ENCODE measurements at regions of chr1 and their contacts with region 1.

Region 1: DNA sequence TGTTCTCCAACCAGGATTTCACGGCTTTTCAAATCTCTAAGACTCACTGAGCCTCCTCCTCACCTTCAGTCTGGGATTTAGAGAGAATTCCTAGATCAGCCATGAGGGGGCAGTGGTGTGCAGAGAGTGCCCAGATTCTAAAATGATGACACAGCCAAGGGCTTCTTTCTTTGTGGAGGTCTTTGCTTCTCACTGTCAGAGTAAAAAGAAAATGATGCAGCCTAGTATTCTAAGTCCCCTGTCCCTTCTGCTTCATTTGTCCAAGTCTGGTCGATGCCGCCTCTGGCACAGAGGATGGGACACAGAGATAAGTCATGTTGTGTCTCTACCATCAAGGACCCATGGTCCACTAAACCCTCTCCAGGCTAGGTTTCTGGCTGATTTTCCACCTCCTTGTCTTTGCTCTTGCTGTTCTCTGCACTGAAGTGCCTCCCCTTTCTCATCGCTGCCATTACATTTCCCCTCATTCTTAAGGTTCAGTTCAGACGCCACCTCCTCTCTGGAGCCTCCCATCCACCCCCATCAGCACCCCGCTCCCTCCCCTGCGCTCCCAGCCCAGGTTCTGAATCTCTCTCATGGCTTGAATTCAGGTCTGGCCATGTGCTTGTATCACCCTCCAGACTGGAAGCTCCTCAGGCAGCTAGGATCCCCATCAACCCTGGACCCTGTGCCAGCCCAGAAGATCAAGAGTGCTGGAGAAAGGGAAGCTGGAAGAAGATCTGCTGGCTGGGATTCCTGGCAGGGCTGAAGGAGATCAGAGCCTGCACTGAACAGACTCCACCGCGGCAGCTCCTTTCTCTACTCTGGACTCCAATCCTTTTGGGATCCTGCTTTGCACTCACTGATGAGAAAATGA is 12.0 kb upstream of the TINAGL1 start:
- DNase-seq: peak; percentile 63 to 76
- H3K4me3 ChIP-seq: no peak overlapping the region
- H3K4me3 Mint-ChIP-seq: no peak overlapping the region
- H3K27ac Mint-ChIP-seq: peak overlapping the region; percentile 95
- H3K4me1 ChIP-seq: peaks cover 28% of the 10 kb centered on the region
- H3K4me1 Mint-ChIP-seq: peaks cover 19% of the 10 kb centered on the region
- H3K27me3 ChIP-seq: no peaks in the 10 kb centered on the region
- H3K27me3 Mint-ChIP-seq: no peaks in the 10 kb centered on the region
- CTCF ChIP-seq: peak; percentile 51 to 62

Region 2: DNA sequence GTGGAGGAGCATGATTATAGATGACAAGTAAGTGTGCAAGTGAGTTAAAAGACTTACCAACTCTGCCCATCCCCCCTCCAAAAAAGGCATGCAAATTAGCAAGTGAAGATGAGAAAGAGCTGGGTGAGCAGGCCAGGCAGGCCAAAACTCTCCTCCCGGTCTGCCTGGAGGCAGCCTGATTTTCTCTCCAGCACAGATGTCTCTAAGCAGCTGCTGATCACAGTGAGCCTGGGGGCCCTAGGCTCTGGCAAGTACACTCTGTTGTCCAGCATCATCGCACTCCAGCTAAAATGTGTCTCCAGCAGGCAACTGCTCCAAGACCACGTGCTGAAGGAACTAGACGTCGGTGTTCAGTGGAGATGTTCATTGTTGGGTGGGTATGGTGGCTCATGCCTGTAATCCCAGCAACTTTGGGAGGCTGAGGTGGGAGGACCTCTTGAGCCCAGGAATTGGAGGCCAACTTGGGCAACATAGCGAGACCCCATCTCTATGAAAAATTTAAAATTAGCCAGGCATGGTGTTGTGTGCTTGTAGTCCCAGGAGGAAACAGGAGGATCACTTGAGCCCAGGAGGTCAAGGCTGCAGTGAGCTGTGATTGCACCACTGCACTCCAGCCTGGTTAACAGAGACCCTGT is 442.1 kb before region 1 on chr1:
- CTCF ChIA-PET with region 1: no interaction called
- POLR2A ChIA-PET with region 1: no interaction called
- intact Hi-C with region 1: no loop called
- DNase-seq: no peak
- H3K4me3 ChIP-seq: no peak overlapping the region
- H3K4me3 Mint-ChIP-seq: no peak overlapping the region
- H3K27ac Mint-ChIP-seq: no peak overlapping the region
- H3K4me1 ChIP-seq: no peaks in the 10 kb centered on the region
- H3K4me1 Mint-ChIP-seq: no peaks in the 10 kb centered on the region
- H3K27me3 ChIP-seq: no peaks in the 10 kb centered on the region
- H3K27me3 Mint-ChIP-seq: no peaks in the 10 kb centered on the region
- CTCF ChIP-seq: no peak

Region 3: GRCh38 chr1:31576201-31576669 is 11.9 kb after region 1 on chr1 and contains the start of gene TINAGL1:
- CTCF ChIA-PET with region 1: no interaction called
- POLR2A ChIA-PET with region 1: interaction called, 4 read pairs
- intact Hi-C with region 1: loop called (anchors 1 kb)
- DNase-seq: peak; percentile 86
- H3K4me3 ChIP-seq: peak within 1 kb of the TSS; percentile 75
- H3K4me3 Mint-ChIP-seq: no peak within 1 kb of the TSS
- H3K27ac Mint-ChIP-seq: peak within 1 kb of the TSS; percentile 83
- H3K4me1 ChIP-seq: peaks cover 47% of the 10 kb centered on the region
- H3K4me1 Mint-ChIP-seq: peaks cover 30% of the 10 kb centered on the region
- H3K27me3 ChIP-seq: no peaks in the 10 kb centered on the region
- H3K27me3 Mint-ChIP-seq: no peaks in the 10 kb centered on the region
- CTCF ChIP-seq: no peak
- total RNA-seq, gene TINAGL1: 89.3 and 101 TPM in 2 replicates

Region 4: GRCh38 chr1:31762726-31763670 is 198.6 kb after region 1 on chr1:
- CTCF ChIA-PET with region 1: no interaction called
- POLR2A ChIA-PET with region 1: no interaction called
- intact Hi-C with region 1: no loop called
- DNase-seq: peak in 1 of 2 experiments; percentile 72
- H3K4me3 ChIP-seq: peak overlapping the region; percentile 38
- H3K4me3 Mint-ChIP-seq: peak overlapping the region; percentile 84
- H3K27ac Mint-ChIP-seq: no peak overlapping the region
- H3K4me1 ChIP-seq: peaks cover 25% of the 10 kb centered on the region
- H3K4me1 Mint-ChIP-seq: peaks cover 8% of the 10 kb centered on the region
- H3K27me3 ChIP-seq: no peaks in the 10 kb centered on the region
- H3K27me3 Mint-ChIP-seq: peaks cover 6% of the 10 kb centered on the region
- CTCF ChIP-seq: peak; percentile 33 to 37